B cell (primary cell): ENCODE measurements at regions of chr7 and their contacts with region 1.

Region 1: GRCh38 chr7:2555121-2556052 is at the start of gene BRAT1:
- DNase-seq: peak; percentile 95
- ATAC-seq: peak; percentile 87
- H3K4me3 ChIP-seq: peak within 1 kb of the TSS; percentile 47 to 87 (median 81)
- H3K4me3 Mint-ChIP-seq: peak within 1 kb of the TSS; percentile 90
- H3K27ac ChIP-seq: peak within 1 kb of the TSS; percentile 96 to 100
- H3K27ac Mint-ChIP-seq: peak within 1 kb of the TSS; percentile 96
- H3K4me1 ChIP-seq: peaks cover 26 to 34% of the 10 kb centered on the region in 2 donors
- H3K4me1 Mint-ChIP-seq: peaks cover 38% of the 10 kb centered on the region
- H3K27me3 ChIP-seq: no peaks in the 10 kb centered on the region
- H3K27me3 Mint-ChIP-seq: no peaks in the 10 kb centered on the region
- CTCF ChIP-seq: peak; percentile 59
- total RNA-seq, gene BRAT1: 36.8 and 40.7 TPM in 2 replicates

Region 2: GRCh38 chr7:2403014-2403717 is 152.2 kb before region 1 on chr7 and contains the start of gene CHST12:
- CTCF ChIA-PET with region 1: no interaction called
- POLR2A ChIA-PET with region 1: no interaction called
- intact Hi-C with region 1: loop called (anchors 2 kb)
- DNase-seq: peak; percentile 98
- ATAC-seq: peak; percentile 78
- H3K4me3 ChIP-seq: peak within 1 kb of the TSS; percentile 50 to 83 (median 77)
- H3K4me3 Mint-ChIP-seq: peak within 1 kb of the TSS; percentile 88
- H3K27ac ChIP-seq: peak within 1 kb of the TSS; percentile 27 to 72
- H3K27ac Mint-ChIP-seq: peak within 1 kb of the TSS; percentile 86
- H3K4me1 ChIP-seq: peaks cover 33 to 55% of the 10 kb centered on the region in 2 donors
- H3K4me1 Mint-ChIP-seq: peaks cover 46% of the 10 kb centered on the region
- H3K27me3 ChIP-seq: no peaks in the 10 kb centered on the region
- H3K27me3 Mint-ChIP-seq: no peaks in the 10 kb centered on the region
- CTCF ChIP-seq: no peak
- total RNA-seq, gene CHST12: 25.4 TPM in 2 replicates

Region 3: DNA sequence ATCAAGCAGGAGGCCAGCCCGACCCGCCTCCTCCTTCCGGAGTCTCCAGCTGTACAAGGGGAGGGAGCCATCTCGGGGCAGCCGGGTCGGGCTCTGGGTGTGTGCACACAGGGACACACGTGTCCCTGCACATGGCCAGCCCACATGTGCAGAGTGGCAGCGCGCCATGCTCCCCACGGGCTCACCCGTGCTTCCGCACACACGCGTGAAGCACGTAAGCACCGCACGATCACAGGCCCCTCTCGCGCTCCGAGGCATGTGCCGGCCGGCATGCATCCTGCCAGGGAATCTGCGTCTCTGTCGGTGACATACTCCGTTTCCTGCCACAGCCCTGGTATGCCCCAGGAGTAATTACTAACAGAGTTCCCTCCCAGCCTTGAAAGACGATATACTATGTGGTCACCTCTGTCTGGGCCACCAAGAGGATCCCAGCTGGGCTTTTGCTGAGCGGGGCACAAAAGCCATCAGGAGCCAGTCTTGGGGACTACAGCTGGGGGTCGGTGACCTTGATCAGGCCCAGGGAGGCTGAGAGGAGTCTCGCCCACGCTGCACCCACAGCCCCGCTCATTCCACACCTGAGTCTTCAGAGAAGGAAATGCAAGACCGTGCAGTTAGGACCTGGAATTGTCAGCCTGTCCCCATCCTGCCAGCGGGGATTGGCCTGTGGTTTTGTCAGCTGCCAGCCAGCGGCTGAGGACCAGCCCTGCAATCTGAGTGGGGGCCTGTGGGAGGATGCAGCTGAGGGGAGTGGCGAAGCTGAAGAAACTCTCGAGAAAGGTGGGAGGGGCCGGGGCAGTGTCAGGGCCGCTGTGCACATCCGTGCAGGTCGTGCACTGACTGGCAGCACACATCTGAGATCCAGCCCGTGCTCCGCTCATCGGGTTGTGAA is 46.8 kb before region 1 on chr7:
- CTCF ChIA-PET with region 1: interaction called, 3 read pairs
- POLR2A ChIA-PET with region 1: interaction called, 12 read pairs
- intact Hi-C with region 1: loop called (anchors 1 kb)
- DNase-seq: peak; percentile 90
- ATAC-seq: peak; percentile 48
- H3K4me3 ChIP-seq: peak overlapping the region in 4 of 5 experiments; percentile 25 to 46 (median 34)
- H3K4me3 Mint-ChIP-seq: peak overlapping the region; percentile 88
- H3K27ac ChIP-seq: peak overlapping the region; percentile 99 to 100
- H3K27ac Mint-ChIP-seq: peak overlapping the region; percentile 99
- H3K4me1 ChIP-seq: peaks cover 58 to 63% of the 10 kb centered on the region in 2 donors
- H3K4me1 Mint-ChIP-seq: peaks cover 67% of the 10 kb centered on the region
- H3K27me3 ChIP-seq: no peaks in the 10 kb centered on the region
- H3K27me3 Mint-ChIP-seq: no peaks in the 10 kb centered on the region
- CTCF ChIP-seq: no peak

Region 4: DNA sequence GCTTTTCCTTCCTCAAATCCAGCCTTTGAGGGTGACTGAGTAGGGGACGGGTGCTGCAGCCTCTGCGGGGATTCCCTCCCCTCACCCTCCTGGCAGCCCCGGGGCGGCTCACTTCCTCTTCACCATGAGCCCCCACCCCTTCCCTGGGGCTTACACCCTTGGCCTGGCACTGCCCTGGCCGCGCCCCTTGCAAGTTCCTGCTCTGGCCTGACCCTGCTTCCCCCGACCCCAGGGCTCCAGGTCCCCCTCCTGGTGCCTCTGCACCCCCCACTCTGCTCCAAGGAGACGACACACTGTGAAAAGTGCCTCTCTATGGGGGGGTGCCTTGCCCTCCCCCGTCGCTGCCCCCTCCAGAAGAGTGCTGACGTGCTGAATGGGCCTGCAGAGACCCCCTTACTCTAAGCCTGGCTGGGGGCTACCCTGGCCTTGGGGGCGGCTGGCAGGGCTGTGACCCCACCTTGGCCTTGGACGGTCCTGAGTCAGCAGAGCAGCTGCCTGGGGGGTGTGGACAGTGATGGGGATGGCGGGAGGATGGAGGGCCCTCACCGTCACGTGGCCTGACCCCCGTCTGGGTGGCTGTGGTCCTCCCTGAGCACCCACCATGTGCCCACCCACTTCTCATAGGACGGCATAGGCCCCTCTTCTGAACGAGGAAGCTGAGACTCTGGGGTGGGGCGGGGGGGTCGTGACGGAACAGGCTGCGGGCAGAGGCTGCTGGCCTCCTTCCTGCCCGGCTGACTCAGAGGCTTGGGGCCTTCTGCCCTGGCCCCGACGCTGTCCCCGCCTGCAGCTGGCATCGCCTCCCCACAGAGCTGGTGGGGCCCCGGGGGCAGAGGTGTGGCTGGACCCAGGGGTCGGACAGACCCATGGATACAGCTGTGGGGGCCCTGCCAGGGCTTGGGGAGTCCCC is 26.0 kb before region 1 on chr7:
- CTCF ChIA-PET with region 1: interaction called, 3 read pairs
- POLR2A ChIA-PET with region 1: interaction called, 11 read pairs
- intact Hi-C with region 1: loop called (anchors 1 kb)
- DNase-seq: peak; percentile 94
- ATAC-seq: peak; percentile 65
- H3K4me3 ChIP-seq: peak overlapping the region in 4 of 5 experiments; percentile 38 to 52 (median 43)
- H3K4me3 Mint-ChIP-seq: peak overlapping the region; percentile 90
- H3K27ac ChIP-seq: peak overlapping the region; percentile 97
- H3K27ac Mint-ChIP-seq: peak overlapping the region; percentile 99
- H3K4me1 ChIP-seq: peaks cover 66 to 74% of the 10 kb centered on the region in 2 donors
- H3K4me1 Mint-ChIP-seq: peaks cover 67% of the 10 kb centered on the region
- H3K27me3 ChIP-seq: no peaks in the 10 kb centered on the region
- H3K27me3 Mint-ChIP-seq: no peaks in the 10 kb centered on the region
- CTCF ChIP-seq: no peak

Region 5: DNA sequence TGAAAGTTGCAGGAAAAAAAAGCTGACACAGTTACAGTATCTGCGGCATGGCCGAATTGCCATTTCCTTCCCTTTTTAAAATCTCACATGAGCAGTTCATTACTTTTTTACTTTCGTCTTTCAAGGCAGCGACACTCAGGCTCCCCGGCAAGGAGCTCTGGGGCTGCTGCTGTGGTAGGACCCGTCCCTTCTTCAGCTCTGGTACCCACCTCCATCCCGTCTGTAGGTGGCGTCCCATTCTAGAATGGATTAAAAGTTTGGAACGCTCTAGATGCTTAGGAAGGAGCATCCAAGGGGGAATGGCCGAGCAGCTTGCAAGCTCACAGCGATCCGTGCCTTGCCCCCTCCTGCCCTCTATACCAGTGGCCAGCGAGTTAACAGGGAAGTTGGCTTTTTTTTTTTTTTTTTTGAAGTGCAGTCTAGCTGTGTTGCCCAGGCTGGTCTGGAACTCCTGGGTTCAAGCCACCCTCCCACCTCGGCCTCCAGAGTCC is 53.6 kb after region 1 on chr7:
- CTCF ChIA-PET with region 1: no interaction called
- POLR2A ChIA-PET with region 1: no interaction called
- intact Hi-C with region 1: loop called (anchors 2 kb)
- DNase-seq: peak; percentile 83
- ATAC-seq: peak; percentile 94
- H3K4me3 ChIP-seq: peak overlapping the region in 4 of 5 experiments; percentile 18 to 48 (median 37)
- H3K4me3 Mint-ChIP-seq: peak overlapping the region; percentile 87
- H3K27ac ChIP-seq: peak overlapping the region in 1 of 2 donors; percentile 42
- H3K27ac Mint-ChIP-seq: peak overlapping the region; percentile 88
- H3K4me1 ChIP-seq: peaks cover 15 to 25% of the 10 kb centered on the region in 2 donors
- H3K4me1 Mint-ChIP-seq: peaks cover 25% of the 10 kb centered on the region
- H3K27me3 ChIP-seq: no peaks in the 10 kb centered on the region
- H3K27me3 Mint-ChIP-seq: no peaks in the 10 kb centered on the region
- CTCF ChIP-seq: peak; percentile 57

Region 6: DNA sequence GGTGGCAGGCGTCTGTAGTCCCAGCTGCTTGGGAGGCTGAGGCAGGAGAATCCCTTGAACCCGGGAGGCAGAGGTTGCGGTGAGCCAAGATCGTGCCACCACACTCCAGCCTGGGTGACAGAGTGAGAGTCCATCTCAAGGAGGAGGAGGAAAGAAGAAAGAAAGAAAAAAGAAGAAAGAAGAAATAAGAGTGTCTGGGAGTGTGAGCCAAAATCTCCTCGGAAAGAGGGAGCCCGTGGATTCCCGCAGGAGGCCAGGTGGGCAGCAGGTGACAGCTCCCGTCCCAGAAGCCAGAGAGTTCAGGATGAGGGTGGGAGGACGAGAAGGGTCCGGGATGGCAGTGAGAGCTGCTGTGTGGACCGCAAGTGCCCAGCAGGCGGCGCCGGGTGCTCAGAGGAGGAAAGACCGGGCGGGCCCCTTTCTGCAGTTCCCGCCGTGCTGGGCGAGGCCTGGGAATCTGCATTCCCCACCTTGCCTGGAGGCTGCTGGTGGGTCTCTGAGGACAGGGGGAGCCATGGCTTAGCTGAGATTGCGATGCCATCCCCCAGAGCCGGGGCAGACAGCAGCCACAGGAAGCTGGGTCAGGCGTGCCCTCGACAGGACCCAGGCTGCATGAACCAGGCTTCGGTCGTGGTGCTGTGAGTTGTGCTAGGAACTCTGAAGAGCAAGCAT is 115.5 kb after region 1 on chr7:
- CTCF ChIA-PET with region 1: no interaction called
- POLR2A ChIA-PET with region 1: interaction called, 16 read pairs
- intact Hi-C with region 1: no loop called
- DNase-seq: peak; percentile 79
- ATAC-seq: peak; percentile 88
- H3K4me3 ChIP-seq: no peak overlapping the region
- H3K4me3 Mint-ChIP-seq: no peak overlapping the region
- H3K27ac ChIP-seq: no peak overlapping the region
- H3K27ac Mint-ChIP-seq: no peak overlapping the region
- H3K4me1 ChIP-seq: peaks cover 6 to 8% of the 10 kb centered on the region in 2 donors
- H3K4me1 Mint-ChIP-seq: peaks cover 6% of the 10 kb centered on the region
- H3K27me3 ChIP-seq: peaks cover 0 to 2% (median 0%) of the 10 kb centered on the region in 4 experiments
- H3K27me3 Mint-ChIP-seq: peaks cover 10% of the 10 kb centered on the region
- CTCF ChIP-seq: peak; percentile 87

Region 7: DNA sequence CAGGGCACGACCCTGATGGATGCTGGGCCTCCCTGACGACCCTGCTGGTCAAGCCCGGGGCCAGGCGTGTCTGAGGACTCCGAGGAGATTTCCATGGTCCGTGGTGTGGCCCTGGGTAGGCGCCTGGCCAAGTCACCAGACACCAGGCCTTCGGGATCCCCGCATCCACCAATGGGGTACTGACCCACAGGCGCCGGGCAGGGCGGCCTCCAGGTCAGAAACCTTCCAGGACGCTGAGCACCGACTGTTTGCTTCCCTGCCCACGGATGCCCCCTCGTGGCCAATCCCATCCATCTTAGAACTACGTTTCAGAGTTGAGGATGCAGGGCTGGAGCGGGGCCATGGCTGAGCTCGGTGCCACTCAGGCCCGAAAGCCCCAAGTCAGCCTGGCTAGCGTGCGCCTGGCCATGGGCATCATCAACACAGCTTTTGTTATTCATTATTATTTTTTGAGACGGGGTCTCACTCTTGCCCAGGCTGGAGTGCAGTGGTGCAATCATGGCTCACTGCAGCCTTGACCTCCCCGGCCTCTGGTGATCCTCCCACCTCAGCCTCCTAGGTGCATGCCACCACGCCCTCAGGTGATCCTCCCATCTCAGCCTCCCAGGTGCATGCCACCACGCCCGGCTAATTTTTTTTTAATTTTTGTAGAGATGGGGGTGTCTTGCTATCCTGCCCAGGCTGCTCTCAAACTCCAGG is 125.6 kb after region 1 on chr7:
- CTCF ChIA-PET with region 1: no interaction called
- POLR2A ChIA-PET with region 1: no interaction called
- intact Hi-C with region 1: no loop called
- DNase-seq: peak; percentile 74
- ATAC-seq: peak; percentile 73
- H3K4me3 ChIP-seq: no peak overlapping the region
- H3K4me3 Mint-ChIP-seq: no peak overlapping the region
- H3K27ac ChIP-seq: no peak overlapping the region
- H3K27ac Mint-ChIP-seq: no peak overlapping the region
- H3K4me1 ChIP-seq: peaks cover 0 to 4% of the 10 kb centered on the region in 2 donors
- H3K4me1 Mint-ChIP-seq: no peaks in the 10 kb centered on the region
- H3K27me3 ChIP-seq: peaks cover 0 to 6% (median under 1%) of the 10 kb centered on the region in 4 experiments
- H3K27me3 Mint-ChIP-seq: peaks cover 12% of the 10 kb centered on the region
- CTCF ChIP-seq: peak; percentile 68